Cardiac septum (tissue), 1 donor: ENCODE measurements at regions of chr1 and their contacts with region 1.

Region 1: GRCh38 chr1:11838349-11839272 is 9.0 kb downstream of the NPPA start:
- DNase-seq: peak; percentile 91

Region 2: DNA sequence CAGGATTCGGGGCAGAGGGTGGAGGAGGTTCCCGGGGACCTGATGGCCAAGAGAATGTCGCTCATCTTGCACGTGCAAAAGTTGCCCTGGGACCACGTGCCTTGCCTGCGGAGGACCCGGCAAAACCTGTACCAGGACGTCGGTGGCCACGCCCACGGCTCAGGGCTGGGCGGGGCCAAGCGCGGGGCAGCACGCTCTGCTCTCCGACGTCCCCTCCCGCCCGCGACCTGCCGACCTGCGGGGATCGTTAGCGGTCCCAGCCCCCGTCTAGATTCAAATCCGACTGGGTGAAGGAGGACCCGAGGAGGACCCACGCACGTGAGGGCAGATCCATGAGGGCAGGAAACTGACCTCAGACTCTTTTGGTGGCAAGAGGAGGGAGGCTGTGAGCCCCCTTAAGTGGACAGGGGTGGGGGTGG is 76.6 kb before region 1 on chr1 and contains the start of gene C1orf167:
- intact Hi-C with region 1: no loop called
- DNase-seq: no peak
- total RNA-seq, gene C1orf167: 2.3 TPM

Region 3: DNA sequence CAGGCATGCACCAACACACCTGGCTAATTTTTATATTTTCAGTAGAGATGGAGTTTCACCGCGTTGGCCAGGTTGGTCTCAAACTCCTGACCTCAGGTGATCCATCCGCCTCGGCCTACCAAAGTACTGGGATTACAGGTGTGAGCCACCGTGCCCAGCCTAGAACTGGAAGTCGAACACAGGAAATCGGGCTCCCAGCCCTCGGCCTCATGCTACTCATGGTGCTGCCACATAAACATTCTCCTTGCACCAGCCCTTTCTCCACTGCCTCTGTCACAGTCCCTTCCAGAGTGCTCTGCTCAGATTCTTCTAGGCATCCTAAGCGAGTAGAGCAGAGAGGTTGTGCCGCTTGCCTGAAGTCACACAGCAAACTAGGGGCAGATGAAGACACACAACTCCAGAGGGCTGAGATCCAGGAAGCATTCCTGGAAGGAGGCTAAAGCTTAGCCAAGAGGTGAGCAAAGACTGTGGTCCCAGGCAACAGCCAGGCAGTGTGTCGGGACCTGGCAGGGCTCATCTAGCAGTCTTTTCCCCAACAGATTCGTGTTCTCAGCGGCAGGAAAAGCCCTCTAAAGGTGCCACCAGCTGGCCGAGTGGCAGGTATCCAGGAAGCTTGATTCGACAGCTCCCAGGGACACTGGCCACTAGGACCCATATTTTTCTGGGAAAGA is 49.7 kb after region 1 on chr1:
- intact Hi-C with region 1: loop called (anchors 1 kb)
- DNase-seq: no peak

Region 4: GRCh38 chr1:11893907-11894251 is 55.3 kb after region 1 on chr1:
- intact Hi-C with region 1: loop called (anchors 1 kb)
- DNase-seq: peak; percentile 87

Region 5: DNA sequence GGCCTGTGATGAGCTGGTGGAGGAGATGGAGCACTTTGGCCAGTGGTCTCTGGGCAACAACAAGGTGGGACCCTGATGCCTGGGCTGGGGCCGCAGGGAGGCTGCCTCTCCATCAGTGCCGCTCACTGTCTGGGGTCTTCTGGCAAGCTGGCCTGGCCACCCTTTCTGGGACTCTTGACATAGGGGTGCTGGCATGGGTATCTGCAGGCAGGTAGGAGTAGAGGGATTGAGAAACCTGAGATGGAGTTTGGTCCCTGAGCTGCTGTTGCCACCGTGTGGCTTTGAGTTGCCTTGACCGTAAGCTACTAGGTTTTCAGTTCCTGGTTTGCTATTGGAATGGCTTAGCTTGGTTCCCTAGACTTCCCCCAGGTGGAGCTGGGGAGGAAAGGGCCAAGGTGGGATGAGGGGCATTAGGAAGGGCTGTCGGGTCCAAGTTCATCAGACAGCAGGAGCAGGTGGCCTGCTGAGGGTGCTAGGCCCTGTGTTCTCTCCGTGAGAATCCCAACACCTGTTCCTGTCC is 128.5 kb after region 1 on chr1:
- intact Hi-C with region 1: loop called (anchors 5 kb)
- DNase-seq: no peak

Region 6: GRCh38 chr1:12031039-12031980 is 192.7 kb after region 1 on chr1:
- intact Hi-C with region 1: loop called (anchors 5 kb)
- DNase-seq: no peak